WTC11 (cell line): ENCODE measurements at regions of chr15 and their contacts with region 1.

Region 1: DNA sequence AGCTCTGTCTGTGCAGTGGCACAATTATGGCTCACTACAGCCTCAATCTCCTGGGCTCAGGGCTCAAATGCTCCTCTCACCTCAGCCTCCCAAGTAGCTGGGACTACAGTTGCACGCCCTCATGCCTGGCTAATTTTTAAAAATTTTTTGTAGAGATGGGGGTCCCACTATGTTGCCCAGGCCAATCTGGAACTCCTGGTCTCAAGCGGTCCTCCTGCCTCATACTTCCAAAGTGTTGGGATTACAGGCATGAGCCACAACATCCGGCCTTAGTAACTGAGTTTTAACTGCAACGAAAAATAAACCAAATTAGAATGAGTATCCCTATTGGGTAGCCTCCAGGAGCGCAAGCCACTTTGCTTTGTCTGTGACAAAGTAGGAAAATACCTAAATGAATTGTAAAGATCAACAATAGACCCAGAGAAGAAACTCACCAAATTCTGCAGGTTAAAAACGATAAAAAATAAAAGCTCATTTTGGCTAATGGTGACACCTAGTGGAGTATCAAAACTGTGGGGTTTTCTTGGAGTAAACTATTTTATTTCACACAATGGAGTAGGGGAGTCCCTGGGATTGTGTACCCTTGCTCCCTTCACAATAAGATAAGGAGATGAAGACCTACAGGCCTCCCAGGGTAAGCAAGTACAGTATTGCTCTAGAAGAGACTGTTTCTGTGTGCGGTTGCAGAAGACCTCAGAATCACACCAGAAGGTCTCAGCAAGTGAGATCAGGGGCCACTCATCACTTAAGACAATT is 21.0 kb upstream of the CA12 start:
- DNase-seq: no peak
- ATAC-seq: peak; percentile 83
- H3K4me3 Mint-ChIP-seq: no peak overlapping the region
- H3K27ac Mint-ChIP-seq: no peak overlapping the region
- H3K4me1 Mint-ChIP-seq: peaks cover 9% of the 10 kb centered on the region
- H3K27me3 Mint-ChIP-seq: peaks cover 35% of the 10 kb centered on the region
- CTCF ChIP-seq: peak; percentile 41; the same call in 1 of the 2 replicates

Region 2: DNA sequence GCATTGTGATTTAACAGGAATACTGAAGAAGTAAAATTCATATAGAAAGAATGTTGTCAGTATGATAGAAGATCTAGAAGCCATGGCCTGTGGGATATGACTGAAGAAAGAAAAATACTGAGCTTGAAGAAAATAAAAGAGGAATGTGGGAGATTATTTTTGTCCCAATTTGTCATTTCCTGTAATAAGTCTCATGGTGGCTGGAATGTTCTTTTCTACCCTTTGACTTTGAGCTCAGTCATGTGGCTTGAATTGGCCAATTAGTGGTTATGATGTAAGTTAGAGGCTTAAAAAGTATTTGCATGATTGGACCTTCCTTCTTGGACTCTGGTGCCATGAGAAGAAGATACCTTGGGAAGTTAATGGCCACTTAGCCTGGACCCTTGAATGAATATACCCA is 111.2 kb before region 1 on chr15:
- CTCF ChIA-PET with region 1: interaction called, 11 read pairs
- POLR2A ChIA-PET with region 1: no interaction called
- DNase-seq: no peak
- ATAC-seq: no peak
- H3K4me3 Mint-ChIP-seq: no peak overlapping the region
- H3K27ac Mint-ChIP-seq: no peak overlapping the region
- H3K4me1 Mint-ChIP-seq: peaks cover 9% of the 10 kb centered on the region
- H3K27me3 Mint-ChIP-seq: no peaks in the 10 kb centered on the region
- CTCF ChIP-seq: no peak

Region 3: DNA sequence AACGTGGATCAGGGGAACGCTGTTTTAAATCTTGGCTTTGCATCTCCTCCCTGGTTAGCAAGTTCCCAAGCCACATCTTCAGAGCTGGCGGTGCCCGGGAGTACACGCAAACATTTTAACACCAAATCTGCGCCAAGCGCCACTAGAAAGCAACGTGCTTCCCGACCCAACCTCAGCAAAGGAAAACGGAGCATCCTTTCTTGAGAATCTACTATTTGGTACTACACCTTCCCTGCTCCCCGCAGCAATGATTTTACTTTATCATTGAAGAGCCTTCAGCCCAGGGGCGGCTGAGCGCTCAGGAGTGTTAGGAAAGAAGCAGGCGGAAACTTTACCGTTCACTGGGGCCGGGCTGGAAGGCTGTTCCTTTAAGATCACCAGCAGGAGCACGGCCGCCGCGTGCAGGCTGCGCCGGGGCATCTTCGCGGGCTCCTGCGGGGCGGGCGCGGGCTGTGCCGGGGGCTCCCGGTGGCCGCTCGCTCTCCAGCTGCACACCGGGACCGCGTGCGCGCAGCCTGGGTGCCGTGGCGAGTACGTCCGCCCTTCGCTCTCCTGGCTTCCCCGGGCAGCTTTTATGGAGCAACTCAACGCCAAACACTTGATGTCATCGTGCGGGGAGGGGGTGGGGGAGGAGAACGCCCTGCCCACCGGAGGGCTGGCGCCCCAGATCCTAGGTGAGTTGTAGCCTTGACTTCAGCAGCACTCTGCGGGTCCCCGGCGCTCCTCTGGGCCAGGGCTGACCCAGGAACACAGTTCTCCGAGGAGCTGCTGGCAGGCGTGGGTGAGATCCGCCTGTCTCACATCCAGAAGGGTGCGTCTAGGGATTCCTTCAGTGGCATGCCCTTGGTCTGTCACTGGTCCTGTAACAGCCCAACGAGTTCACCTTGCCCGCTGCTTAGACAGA is 21.1 kb before region 1 on chr15 and contains the start of gene CA12:
- CTCF ChIA-PET with region 1: interaction called, 11 read pairs
- POLR2A ChIA-PET with region 1: no interaction called
- DNase-seq: peak; percentile 64
- ATAC-seq: peak; percentile 77
- H3K4me3 Mint-ChIP-seq: peak within 1 kb of the TSS; percentile 73
- H3K27ac Mint-ChIP-seq: no peak within 1 kb of the TSS
- H3K4me1 Mint-ChIP-seq: peaks cover 41% of the 10 kb centered on the region
- H3K27me3 Mint-ChIP-seq: peaks cover 63% of the 10 kb centered on the region
- CTCF ChIP-seq: no peak
- total RNA-seq, gene CA12: 2.8 to 3.3 TPM (median 2.8 TPM) in 3 replicates

Region 4: DNA sequence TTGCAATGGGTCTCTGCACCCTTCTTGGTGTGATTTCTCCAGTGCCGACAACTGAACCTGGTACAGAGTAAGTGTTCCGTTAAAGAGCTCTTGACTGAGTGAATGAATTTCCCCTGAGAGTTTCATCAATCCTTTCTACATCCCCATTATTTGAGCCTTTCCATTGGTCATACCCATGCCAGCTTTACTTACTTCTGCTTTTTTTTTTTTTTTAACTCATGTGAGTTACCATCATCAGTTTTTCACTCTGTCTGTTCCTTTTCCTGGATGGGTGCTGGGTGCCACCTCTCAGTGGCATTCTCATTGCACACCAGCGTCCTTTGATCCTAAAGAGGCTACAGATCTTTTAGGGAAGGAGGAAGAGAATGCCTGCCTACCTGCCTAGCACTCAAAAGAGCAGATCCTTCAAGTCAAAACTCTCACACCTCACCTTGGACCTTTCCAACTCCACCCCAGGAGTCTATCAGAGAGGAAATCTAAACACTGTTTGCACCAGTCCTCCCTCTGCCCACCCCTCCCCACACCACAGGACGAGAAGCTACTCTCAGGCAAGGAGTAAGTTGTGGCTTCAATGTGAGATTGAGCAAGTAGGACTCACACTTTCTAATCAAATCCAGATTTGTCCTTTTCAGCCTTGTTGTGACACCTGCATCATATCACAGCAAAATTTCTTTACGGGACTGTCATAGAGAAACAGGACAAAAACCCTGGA is 88.6 kb after region 1 on chr15:
- CTCF ChIA-PET with region 1: no interaction called
- POLR2A ChIA-PET with region 1: no interaction called
- DNase-seq: no peak
- ATAC-seq: no peak
- H3K4me3 Mint-ChIP-seq: no peak overlapping the region
- H3K27ac Mint-ChIP-seq: no peak overlapping the region
- H3K4me1 Mint-ChIP-seq: peaks cover 48% of the 10 kb centered on the region
- H3K27me3 Mint-ChIP-seq: peaks cover 38% of the 10 kb centered on the region
- CTCF ChIP-seq: no peak